WTC11 (cell line): ENCODE measurements at regions of chr1 and their contacts with region 1.

Region 1: DNA sequence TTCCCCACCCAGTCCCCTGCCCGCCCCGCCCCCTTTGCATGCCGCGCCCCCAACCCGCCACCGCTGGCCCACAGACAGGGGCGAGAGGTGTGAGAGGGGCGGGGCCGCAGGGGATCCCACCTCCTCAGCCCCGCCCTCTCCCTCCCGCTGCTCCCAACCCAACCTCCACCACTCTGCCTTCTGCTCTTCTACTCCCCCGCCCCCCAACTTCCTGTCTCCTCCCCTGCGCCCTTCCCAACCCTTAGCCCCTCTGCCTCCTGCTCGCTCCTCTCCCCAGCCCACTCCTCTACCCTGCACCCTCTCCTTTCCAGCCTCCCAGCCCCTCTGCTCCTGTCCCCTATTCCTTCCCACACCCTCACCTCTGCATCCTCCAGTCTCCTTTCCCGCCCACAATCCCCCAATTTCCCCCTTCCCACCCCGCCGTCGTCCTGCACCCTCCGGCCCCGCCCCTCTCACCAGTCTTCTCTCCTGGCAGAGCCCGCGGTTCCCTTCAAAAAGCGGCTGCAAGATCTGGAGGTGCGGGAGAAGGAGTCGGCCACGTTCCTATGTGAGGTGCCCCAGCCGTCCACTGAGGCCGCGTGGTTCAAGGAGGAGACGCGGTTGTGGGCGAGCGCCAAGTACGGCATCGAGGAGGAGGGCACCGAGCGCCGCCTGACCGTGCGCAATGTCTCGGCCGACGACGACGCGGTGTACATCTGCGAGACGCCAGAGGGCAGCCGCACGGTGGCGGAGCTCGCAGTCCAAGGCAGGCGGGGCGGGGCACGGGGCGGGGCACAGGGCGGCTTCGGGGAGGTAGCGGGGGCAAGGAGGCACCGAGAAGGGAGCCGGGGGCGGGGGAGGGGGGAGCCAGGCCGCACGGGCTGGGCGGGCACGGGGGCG is 5.4 kb downstream of the OBSCN start:
- DNase-seq: peak; percentile 94
- ATAC-seq: peak; percentile 82
- H3K4me3 Mint-ChIP-seq: peak overlapping the region; percentile 84
- H3K27ac Mint-ChIP-seq: peak overlapping the region; percentile 95
- H3K4me1 Mint-ChIP-seq: peaks cover 3% of the 10 kb centered on the region; the same call in 1 of the 2 replicates
- H3K27me3 Mint-ChIP-seq: peaks cover 14% of the 10 kb centered on the region
- CTCF ChIP-seq: peak; percentile 22; the same call in 1 of the 2 replicates

Region 2: DNA sequence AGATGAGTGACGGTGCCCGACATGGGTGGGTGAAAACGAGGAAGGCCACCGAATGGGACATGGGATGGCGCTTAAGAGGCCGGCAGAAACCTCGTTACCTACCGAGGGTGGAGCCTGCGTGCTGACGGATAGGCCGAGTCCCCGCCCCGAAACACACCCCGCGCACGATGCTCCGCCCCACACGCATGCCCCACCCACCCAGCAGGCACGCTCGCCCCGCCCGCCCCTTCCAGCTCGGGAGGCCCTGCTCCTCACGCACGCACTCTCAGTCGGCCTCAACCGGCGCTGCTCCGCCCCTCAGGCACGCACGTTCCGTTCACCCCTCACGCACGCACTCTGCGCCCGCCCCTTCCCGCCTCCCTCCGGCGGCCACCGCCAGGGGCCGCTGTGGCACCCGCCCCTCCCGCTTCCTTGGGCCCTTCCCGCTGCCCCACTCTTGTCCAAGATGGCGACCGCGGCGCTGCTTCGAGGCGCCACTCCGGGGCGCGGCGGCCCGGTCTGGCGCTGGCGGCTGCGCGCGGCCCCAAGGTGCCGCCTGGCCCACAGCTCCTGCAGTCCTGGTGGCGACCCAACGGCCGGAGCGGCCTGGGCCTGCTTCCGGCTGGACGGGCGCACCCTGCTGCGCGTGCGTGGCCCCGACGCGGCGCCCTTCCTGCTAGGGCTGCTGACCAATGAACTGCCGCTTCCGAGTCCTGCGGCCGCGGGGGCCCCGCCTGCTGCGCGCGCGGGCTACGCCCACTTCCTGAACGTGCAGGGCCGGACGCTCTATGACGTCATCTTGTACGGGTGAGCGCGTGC is 47.6 kb before region 1 on chr1 and contains the start of gene IBA57:
- CTCF ChIA-PET with region 1: interaction called, 22 read pairs
- POLR2A ChIA-PET with region 1: interaction called, 5 read pairs
- DNase-seq: peak; percentile 99
- ATAC-seq: peak; percentile 94
- H3K4me3 Mint-ChIP-seq: peak within 1 kb of the TSS; percentile 85
- H3K27ac Mint-ChIP-seq: peak within 1 kb of the TSS; percentile 98
- H3K4me1 Mint-ChIP-seq: peaks cover 13% of the 10 kb centered on the region; the same call in 1 of the 2 replicates
- H3K27me3 Mint-ChIP-seq: peaks cover 6% of the 10 kb centered on the region; the same call in 1 of the 2 replicates
- CTCF ChIP-seq: peak; percentile 71
- total RNA-seq, gene IBA57: 11.4 to 12.5 TPM (median 12.1 TPM) in 3 replicates

Region 3: DNA sequence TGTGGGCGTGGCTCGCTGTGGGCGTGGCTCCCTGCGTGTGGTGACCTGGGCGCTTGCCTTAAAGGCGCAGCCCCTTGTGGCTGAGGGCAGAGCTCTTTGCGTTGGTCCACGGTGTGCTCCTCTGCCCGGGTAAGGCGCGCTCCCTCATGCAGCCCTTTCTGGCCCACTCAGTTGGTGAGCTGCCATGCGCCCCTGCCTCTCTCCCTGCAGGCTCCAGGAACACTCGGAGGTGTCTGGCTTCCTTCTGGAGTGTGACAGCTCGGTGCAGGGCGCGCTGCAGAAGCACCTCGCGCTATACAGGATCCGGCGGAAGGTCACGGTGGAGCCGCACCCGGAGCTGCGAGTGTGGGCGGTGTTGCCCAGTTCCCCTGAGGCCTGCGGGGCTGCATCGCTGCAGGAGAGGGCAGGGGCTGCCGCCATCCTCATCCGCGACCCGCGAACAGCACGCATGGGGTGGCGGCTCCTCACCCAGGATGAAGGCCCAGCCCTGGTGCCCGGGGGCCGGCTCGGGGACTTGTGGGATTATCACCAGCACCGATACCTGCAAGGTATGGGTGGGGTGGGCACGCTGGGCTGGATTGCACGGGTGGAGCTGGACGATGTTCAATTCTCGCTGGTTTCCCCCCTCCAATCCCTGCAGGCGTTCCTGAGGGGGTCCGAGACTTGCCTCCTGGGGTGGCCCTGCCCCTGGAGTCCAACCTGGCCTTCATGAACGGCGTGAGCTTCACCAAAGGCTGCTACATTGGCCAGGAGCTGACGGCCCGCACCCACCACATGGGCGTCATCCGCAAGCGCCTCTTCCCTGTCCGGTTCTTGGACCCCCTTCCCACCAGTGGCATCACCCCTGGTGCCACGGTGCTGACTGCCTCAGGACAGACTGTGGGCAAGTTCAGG is 38.5 kb before region 1 on chr1:
- CTCF ChIA-PET with region 1: interaction called, 11 read pairs
- POLR2A ChIA-PET with region 1: interaction called, 3 read pairs
- DNase-seq: peak; percentile 62
- ATAC-seq: peak; percentile 90
- H3K4me3 Mint-ChIP-seq: peak overlapping the region; percentile 22; the same call in 1 of the 2 replicates
- H3K27ac Mint-ChIP-seq: no peak overlapping the region
- H3K4me1 Mint-ChIP-seq: no peaks in the 10 kb centered on the region
- H3K27me3 Mint-ChIP-seq: no peaks in the 10 kb centered on the region
- CTCF ChIP-seq: no peak

Region 4: GRCh38 chr1:228275739-228276421 is 62.7 kb after region 1 on chr1:
- CTCF ChIA-PET with region 1: interaction called, 12 read pairs
- POLR2A ChIA-PET with region 1: no interaction called
- DNase-seq: peak; percentile 90
- ATAC-seq: peak; percentile 85
- H3K4me3 Mint-ChIP-seq: peak overlapping the region; percentile 63
- H3K27ac Mint-ChIP-seq: no peak overlapping the region
- H3K4me1 Mint-ChIP-seq: peaks cover 5% of the 10 kb centered on the region; the same call in 1 of the 2 replicates
- H3K27me3 Mint-ChIP-seq: peaks cover 9% of the 10 kb centered on the region
- CTCF ChIP-seq: no peak